ENCODE measurements at regions of chr14 and their contacts with region 1.

Region 1: DNA sequence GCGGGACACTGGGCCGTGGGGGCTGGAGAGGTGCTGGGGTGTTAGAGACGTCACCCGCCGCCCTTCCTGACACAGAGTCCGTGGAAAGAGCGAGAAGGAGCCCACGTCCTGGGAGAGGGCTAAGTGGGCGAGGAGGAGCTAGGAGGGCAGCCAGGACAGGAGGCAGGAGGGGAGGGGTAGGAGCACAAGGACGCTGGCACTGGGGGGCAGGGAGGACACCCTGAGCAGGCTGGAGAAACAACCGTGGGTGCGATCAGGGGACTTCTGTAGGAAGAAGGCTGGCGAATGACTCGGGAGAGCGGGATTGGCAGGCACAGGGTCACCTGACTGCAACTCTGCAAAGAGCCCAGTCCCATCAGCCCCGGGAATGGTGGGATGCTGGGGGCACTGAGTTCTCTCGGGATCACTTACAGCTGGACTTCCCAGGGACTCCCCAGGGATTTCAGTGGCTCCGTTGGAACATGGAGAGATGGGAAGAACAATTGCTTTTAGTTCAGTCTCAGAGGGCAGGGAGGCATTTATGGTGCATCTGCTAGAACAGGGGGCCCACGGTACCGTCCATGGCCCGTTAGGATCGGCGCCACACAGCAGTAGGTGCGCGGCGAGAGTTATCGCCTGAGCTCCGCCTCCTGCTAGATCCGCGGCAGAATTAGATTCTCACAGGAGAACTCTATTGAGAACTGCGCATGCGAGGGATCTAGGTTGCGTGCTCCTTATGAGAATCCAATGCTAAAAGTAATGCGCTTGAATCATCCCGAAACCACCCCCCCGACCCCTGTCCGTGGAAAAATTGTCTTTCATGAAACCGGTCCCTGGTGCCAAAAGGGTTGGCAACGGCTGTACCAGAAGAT is 24.3 kb downstream of the UBR7 start:
- DNase-seq: peak; percentile 19
- ATAC-seq: peak; percentile 49
- H3K4me3 Mint-ChIP-seq: peak overlapping the region; percentile 45
- H3K27ac Mint-ChIP-seq: no peak overlapping the region
- H3K4me1 Mint-ChIP-seq: peaks cover 9% of the 10 kb centered on the region
- H3K27me3 Mint-ChIP-seq: no peaks in the 10 kb centered on the region

Region 2: DNA sequence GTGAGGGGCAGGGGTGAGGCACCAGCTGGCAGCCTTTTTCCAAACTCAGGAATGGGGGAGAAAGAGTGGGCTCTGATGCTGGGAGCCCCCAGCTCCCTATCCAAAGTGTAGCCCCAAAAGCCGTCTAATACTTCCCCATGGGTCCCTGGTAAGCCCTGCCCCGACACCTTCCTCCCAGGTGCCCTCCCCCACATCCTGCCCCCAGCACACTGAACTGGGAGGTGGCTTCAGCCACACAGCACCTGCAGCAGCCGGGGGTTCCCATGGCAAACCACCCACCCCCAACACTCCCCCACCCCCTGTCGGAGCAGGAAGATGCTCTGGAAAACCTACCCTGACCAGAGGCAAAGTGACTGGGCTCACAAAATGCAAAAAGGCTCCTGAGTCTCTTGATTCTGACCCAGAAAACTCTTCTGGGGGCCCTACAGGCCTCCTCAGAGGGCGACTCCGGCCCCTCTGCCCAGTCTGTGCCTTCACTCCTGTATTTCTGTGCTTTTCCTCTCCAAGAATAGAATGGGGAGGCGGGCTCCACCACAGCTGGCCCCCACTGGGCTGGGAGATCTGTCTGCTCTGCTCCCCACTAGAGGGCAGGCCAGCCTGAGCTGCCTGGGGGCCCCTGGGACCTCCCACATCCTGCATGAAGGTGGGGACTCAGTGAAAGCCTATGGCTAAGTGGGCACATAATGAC is 197.2 kb before region 1 on chr14:
- CTCF ChIA-PET with region 1: no interaction called
- POLR2A ChIA-PET with region 1: no interaction called
- intact Hi-C with region 1: no loop called
- DNase-seq: peak; percentile 60
- ATAC-seq: peak; percentile 79
- H3K4me3 Mint-ChIP-seq: no peak overlapping the region
- H3K27ac Mint-ChIP-seq: peak overlapping the region; percentile 53
- H3K4me1 Mint-ChIP-seq: peaks cover 21% of the 10 kb centered on the region
- H3K27me3 Mint-ChIP-seq: no peaks in the 10 kb centered on the region

Region 3: GRCh38 chr14:93245764-93246420 is 14.5 kb after region 1 on chr14:
- CTCF ChIA-PET with region 1: no interaction called
- POLR2A ChIA-PET with region 1: no interaction called
- intact Hi-C with region 1: no loop called
- DNase-seq: no peak
- ATAC-seq: no peak
- H3K4me3 Mint-ChIP-seq: no peak overlapping the region
- H3K27ac Mint-ChIP-seq: no peak overlapping the region
- H3K4me1 Mint-ChIP-seq: no peaks in the 10 kb centered on the region
- H3K27me3 Mint-ChIP-seq: no peaks in the 10 kb centered on the region

Region 4: GRCh38 chr14:93543766-93544165 is 312.4 kb after region 1 on chr14:
- CTCF ChIA-PET with region 1: no interaction called
- POLR2A ChIA-PET with region 1: no interaction called
- intact Hi-C with region 1: loop called (anchors 5 to 10 kb)
- DNase-seq: no peak
- ATAC-seq: no peak
- H3K4me3 Mint-ChIP-seq: no peak overlapping the region
- H3K27ac Mint-ChIP-seq: no peak overlapping the region
- H3K4me1 Mint-ChIP-seq: no peaks in the 10 kb centered on the region
- H3K27me3 Mint-ChIP-seq: peaks cover 12% of the 10 kb centered on the region

Region 5: GRCh38 chr14:93619176-93619793 is 387.9 kb after region 1 on chr14:
- CTCF ChIA-PET with region 1: no interaction called
- POLR2A ChIA-PET with region 1: no interaction called
- intact Hi-C with region 1: loop called in 1 of 2 experiments (anchors 5 kb)
- DNase-seq: peak; percentile 53
- ATAC-seq: no peak
- H3K4me3 Mint-ChIP-seq: no peak overlapping the region
- H3K27ac Mint-ChIP-seq: no peak overlapping the region
- H3K4me1 Mint-ChIP-seq: no peaks in the 10 kb centered on the region
- H3K27me3 Mint-ChIP-seq: peaks cover 12% of the 10 kb centered on the region